Naive thymus-derived CD4-positive, alpha-beta T cell (primary cell): ENCODE measurements at regions of chrX and their contacts with region 1.

Region 1: GRCh38 chrX:19904778-19905367 is 17.5 kb upstream of the SH3KBP1 start:
- DNase-seq: peak in 6 of 9 donors; percentile 16 to 54 (median 42)
- ATAC-seq: peak; percentile 74
- H3K4me3 ChIP-seq: no peak overlapping the region
- H3K4me3 Mint-ChIP-seq: no peak overlapping the region
- H3K27ac ChIP-seq: no peak overlapping the region
- H3K27ac Mint-ChIP-seq: no peak overlapping the region
- H3K4me1 ChIP-seq: no peaks in the 10 kb centered on the region
- H3K4me1 Mint-ChIP-seq: peaks cover 0 to 17% (median 6%) of the 10 kb centered on the region in 7 donors
- H3K27me3 ChIP-seq: no peaks in the 10 kb centered on the region
- H3K27me3 Mint-ChIP-seq: no peaks in the 10 kb centered on the region

Region 2: DNA sequence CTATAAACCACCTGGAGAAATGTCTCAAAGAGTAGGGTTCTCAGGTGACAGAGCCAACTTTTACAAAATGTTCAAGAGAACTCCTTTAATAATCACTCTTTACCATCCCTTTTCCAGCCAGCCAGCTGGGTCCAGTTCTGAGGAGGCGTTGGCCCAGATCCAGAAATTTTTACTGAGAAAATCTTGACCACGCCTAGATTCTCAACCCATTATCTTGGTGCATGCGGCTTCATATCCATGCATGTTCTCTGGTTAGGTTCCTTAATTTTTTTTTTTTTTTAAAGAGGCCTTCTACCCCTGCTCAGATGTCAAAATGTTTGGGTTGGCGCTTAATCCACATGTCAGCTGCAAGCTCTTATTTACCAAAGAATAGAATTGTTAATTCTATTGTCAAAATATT is 223.8 kb after region 1 on chrX:
- CTCF ChIA-PET with region 1: interaction called, 3 read pairs
- POLR2A ChIA-PET with region 1: no interaction called
- intact Hi-C with region 1: loop called (anchors 2 to 5 kb)
- DNase-seq: no peak
- ATAC-seq: no peak
- H3K4me3 ChIP-seq: no peak overlapping the region
- H3K4me3 Mint-ChIP-seq: no peak overlapping the region
- H3K27ac ChIP-seq: no peak overlapping the region
- H3K27ac Mint-ChIP-seq: peak overlapping the region in 1 of 9 donors; percentile 47
- H3K4me1 ChIP-seq: no peaks in the 10 kb centered on the region
- H3K4me1 Mint-ChIP-seq: peaks cover 0 to 11% (median 0%) of the 10 kb centered on the region in 7 donors
- H3K27me3 ChIP-seq: no peaks in the 10 kb centered on the region
- H3K27me3 Mint-ChIP-seq: no peaks in the 10 kb centered on the region